ENCODE measurements at regions of chr10 and their contacts with region 1.

Region 1: DNA sequence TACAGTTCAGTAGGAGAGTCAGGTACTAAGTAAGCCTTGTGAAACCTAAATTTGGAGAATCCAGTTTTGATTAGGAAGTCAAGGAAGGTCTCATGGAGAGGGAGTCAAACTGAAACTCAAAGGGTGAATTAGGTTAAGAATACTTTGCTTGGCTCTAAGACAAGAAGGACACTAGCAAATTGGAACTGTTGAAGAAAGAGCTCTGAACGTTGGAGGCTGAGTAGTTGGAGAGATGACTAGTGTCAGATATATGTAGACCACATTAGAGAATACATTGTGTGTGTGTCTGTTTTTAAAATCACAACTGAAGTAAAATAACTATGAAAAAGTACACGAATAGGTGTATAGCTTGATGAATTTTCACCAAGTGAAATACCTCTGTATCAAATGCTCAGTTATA is 6.3 kb downstream of the VPS26A start:
- DNase-seq: no peak
- ATAC-seq: peak in 3 of 4 donors; percentile 48 to 79 (median 55)
- H3K4me3 ChIP-seq: no peak overlapping the region
- H3K27ac ChIP-seq: no peak overlapping the region
- H3K4me1 ChIP-seq: peaks cover 35% of the 10 kb centered on the region
- H3K27me3 ChIP-seq: no peaks in the 10 kb centered on the region
- CTCF ChIP-seq: no peak

Region 2: GRCh38 chr10:69172241-69172982 is 42.2 kb after region 1 on chr10:
- intact Hi-C with region 1: loop called in 1 of 2 experiments (anchors 5 kb)
- DNase-seq: no peak
- ATAC-seq: no peak
- H3K4me3 ChIP-seq: no peak overlapping the region
- H3K27ac ChIP-seq: no peak overlapping the region
- H3K4me1 ChIP-seq: no peaks in the 10 kb centered on the region
- H3K27me3 ChIP-seq: no peaks in the 10 kb centered on the region
- CTCF ChIP-seq: no peak

Region 3: GRCh38 chr10:69375307-69376151 is 245.3 kb after region 1 on chr10:
- intact Hi-C with region 1: no loop called
- DNase-seq: peak; percentile 43 to 84
- ATAC-seq: peak; percentile 88 to 97 (median 90)
- H3K4me3 ChIP-seq: peak overlapping the region; percentile 34
- H3K27ac ChIP-seq: peak overlapping the region; percentile 78
- H3K4me1 ChIP-seq: peaks cover 50% of the 10 kb centered on the region
- H3K27me3 ChIP-seq: no peaks in the 10 kb centered on the region
- CTCF ChIP-seq: no peak

Measured in psoas muscle (tissue), 8 donors.